ENCODE measurements at regions of chr6 and their contacts with region 1.

Region 1: GRCh38 chr6:75266716-75267291 is 17.8 kb downstream of the TMEM30A start:
- DNase-seq: peak; percentile 48 to 76 (median 68)
- H3K4me3 ChIP-seq: no peak overlapping the region
- H3K27ac ChIP-seq: no peak overlapping the region
- H3K4me1 ChIP-seq: peaks cover 0 to 5% (median 0%) of the 10 kb centered on the region in 4 experiments
- H3K27me3 ChIP-seq: no peaks in the 10 kb centered on the region

Region 2: DNA sequence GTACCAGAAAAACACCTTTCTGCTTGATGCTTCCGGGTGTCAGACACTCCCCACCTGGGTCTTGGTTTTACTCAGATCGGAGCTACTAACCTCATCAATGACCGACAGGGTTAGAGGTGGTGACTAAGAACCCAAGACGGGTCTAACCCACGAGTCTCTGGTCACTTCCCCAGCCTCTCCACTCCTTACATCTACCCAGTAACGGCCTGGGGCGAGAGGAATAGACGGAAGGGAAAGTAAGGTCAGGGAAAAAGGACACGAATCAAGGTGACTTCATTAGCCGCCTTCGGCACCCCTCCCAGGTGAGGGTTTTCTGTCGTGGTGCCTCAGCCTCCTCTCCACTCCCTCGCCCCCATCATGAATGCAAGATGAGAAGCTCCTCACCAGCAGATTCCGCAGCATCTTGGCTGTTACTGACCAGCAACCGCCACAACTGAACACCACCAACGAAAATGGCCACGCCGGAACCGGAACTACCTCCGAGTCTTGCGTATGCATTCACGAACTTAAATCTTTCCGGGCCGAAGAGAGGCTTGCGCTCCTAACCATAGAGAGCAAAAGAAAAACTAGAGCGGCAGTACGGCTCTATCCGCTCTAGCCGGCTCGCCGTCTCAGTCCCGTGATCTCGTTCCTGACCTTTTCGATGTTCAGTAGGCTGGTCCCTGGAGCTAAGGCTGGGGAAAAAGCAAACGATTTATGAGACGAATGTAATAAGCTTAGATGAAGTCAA is 23.3 kb before region 1 on chr6 and contains the start of gene COX7A2:
- CTCF ChIA-PET with region 1: interaction called, 10 read pairs
- POLR2A ChIA-PET with region 1: no interaction called
- DNase-seq: peak; percentile 97 to 99 (median 98)
- H3K4me3 ChIP-seq: peak within 1 kb of the TSS; percentile 56 to 100 (median 84)
- H3K27ac ChIP-seq: peak within 1 kb of the TSS; percentile 92 to 95
- H3K4me1 ChIP-seq: peaks cover 5 to 16% (median 8%) of the 10 kb centered on the region in 4 experiments
- H3K27me3 ChIP-seq: peaks cover 0 to 22% (median 15%) of the 10 kb centered on the region in 5 experiments

Region 3: GRCh38 chr6:75278474-75279077 is 11.8 kb after region 1 on chr6:
- CTCF ChIA-PET with region 1: interaction called, 16 read pairs
- POLR2A ChIA-PET with region 1: no interaction called
- DNase-seq: peak in 1 of 3 donors; percentile 31
- H3K4me3 ChIP-seq: no peak overlapping the region
- H3K27ac ChIP-seq: no peak overlapping the region
- H3K4me1 ChIP-seq: peaks cover 6 to 39% (median 19%) of the 10 kb centered on the region in 4 experiments
- H3K27me3 ChIP-seq: no peaks in the 10 kb centered on the region

Region 4: DNA sequence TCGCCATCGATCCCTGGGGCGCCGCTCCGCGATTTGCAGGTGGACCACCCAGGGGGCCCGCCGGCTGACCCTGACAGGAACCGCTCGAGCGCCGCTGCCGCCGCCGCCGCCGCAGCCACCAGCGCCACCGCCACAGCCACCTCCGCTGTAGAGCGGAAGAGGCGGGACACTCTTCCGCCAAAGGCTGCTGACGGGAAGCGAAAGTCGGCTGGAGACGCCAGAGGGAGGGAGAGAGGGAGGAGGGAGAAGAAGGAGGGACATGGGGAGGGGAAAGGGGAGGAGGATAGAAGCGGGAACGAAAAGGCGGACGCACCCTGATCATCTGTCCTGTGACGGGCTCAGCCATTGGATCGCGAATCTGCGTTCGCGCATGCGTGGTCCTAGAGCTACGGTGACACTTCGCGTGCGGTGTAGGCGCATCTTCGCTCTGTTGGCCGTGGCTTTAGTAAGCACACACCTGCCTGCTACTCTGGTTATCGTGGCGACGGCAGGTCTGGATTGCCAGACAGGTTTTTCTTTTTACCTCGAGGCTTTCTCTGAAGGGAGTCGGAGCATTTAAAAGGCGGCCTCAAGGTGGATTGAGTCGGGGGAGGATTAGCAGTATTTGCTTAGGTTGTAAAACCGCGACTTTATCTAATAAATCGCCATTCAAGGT is 18.0 kb after region 1 on chr6 and contains the start of gene TMEM30A:
- CTCF ChIA-PET with region 1: interaction called, 16 read pairs
- POLR2A ChIA-PET with region 1: no interaction called
- DNase-seq: peak; percentile 99 to 100 (median 99)
- H3K4me3 ChIP-seq: peak within 1 kb of the TSS; percentile 85 to 100 (median 99)
- H3K27ac ChIP-seq: peak within 1 kb of the TSS; percentile 78 to 95
- H3K4me1 ChIP-seq: peaks cover 10 to 49% (median 29%) of the 10 kb centered on the region in 4 experiments
- H3K27me3 ChIP-seq: no peaks in the 10 kb centered on the region

Region 5: GRCh38 chr6:75526502-75527127 is 259.8 kb after region 1 on chr6:
- CTCF ChIA-PET with region 1: interaction called, 25 read pairs
- POLR2A ChIA-PET with region 1: no interaction called
- DNase-seq: peak; percentile 68 to 86 (median 80)
- H3K4me3 ChIP-seq: no peak overlapping the region
- H3K27ac ChIP-seq: no peak overlapping the region
- H3K4me1 ChIP-seq: no peaks in the 10 kb centered on the region
- H3K27me3 ChIP-seq: peaks cover 0 to 4% (median 2%) of the 10 kb centered on the region in 5 experiments